ENCODE measurements at regions of chr1 and their contacts with region 1.

Region 1: GRCh38 chr1:113759333-113760101 is at the start of gene PHTF1:
- DNase-seq: peak; percentile 53
- H3K4me3 Mint-ChIP-seq: peak within 1 kb of the TSS; percentile 95
- H3K27ac Mint-ChIP-seq: peak within 1 kb of the TSS; percentile 97
- H3K4me1 Mint-ChIP-seq: peaks cover 37% of the 10 kb centered on the region
- H3K27me3 Mint-ChIP-seq: no peaks in the 10 kb centered on the region
- total RNA-seq, gene PHTF1: 14.7 and 16.6 TPM in 2 replicates

Region 2: DNA sequence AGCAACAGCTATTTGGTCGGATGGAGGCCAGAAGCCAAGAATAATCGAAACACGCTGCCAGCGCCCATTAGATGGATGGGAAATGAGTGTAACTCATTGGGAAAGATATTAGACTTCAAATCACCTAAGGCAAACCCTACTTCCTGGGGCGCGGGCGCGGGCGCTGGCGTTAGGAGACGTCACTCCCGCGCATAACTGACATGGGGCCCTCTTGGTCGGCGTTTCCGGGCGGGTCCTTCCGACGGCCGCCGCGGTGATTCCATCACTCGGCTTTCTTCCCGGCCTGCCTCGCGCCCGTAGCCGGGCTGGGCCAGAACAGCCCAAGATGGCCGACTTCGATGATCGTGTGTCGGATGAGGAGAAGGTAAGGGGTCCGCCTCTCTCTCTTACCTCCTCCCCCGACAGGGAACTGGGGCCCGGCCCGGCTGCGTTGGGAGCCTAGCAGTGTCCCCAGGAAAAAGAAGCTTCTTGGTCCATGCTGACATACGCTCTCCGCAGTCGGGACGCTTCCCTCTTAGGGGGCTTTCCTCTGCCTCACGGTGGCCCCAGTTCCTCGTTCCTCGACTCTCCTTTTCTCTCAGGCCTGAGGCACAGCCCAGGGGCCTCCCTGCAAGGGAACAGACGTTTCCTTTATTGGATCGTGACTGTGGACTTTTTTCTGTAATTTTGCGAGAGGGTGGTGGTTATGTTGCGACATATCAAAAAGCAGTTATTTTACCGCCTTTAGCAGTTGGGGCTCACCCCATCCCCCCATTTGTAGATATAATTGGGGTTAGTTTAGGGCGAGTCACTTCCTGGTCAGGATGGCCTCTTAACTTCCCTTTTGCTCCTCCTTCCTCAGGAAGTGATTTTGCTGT is 1139.8 kb before region 1 on chr1 and contains the start of gene CAPZA1:
- intact Hi-C with region 1: loop called (anchors 2 kb)
- DNase-seq: peak; percentile 90
- H3K4me3 Mint-ChIP-seq: peak within 1 kb of the TSS; percentile 98
- H3K27ac Mint-ChIP-seq: peak within 1 kb of the TSS; percentile 98
- H3K4me1 Mint-ChIP-seq: peaks cover 48% of the 10 kb centered on the region
- H3K27me3 Mint-ChIP-seq: no peaks in the 10 kb centered on the region
- total RNA-seq, gene CAPZA1: 239 and 242 TPM in 2 replicates

Region 3: DNA sequence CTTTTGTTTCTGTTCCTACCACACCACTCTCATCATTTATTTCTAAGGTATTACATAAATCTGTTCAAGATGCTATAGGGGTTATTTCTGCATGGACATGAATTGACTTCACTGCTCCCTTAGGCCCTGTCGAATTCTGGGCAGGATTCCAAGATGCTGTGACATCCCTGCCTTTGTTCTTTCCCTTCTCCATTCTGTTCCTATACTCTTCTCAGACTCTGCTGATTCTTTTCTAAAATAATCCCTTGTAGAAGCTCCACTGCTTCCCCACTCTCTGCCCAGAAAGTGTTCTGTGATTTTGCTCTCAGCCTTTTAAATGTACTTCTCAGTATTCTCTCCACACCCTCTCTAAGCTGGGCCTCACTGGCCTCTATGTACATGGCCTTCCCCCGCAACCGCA is 99.4 kb before region 1 on chr1:
- intact Hi-C with region 1: no loop called
- DNase-seq: no peak
- H3K4me3 Mint-ChIP-seq: no peak overlapping the region
- H3K27ac Mint-ChIP-seq: no peak overlapping the region
- H3K4me1 Mint-ChIP-seq: no peaks in the 10 kb centered on the region
- H3K27me3 Mint-ChIP-seq: no peaks in the 10 kb centered on the region

Region 4: DNA sequence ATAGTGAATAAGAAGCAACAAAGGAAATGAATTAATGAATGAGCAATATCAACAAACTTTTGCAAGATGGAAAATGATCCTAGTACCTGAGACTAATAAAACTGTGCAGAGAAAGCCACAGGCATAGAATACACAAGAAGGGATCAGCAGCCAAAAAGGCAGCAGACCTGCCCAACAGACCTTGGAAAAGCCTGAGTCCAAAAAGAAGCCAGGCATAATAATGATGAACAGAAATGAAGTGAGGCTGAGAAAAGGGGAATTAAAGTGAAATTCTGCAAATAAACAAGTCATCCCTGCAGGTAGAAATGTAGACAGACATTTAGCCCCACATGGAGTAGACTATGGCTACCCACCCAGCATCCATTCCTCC is 10.1 kb after region 1 on chr1:
- intact Hi-C with region 1: no loop called
- DNase-seq: no peak
- H3K4me3 Mint-ChIP-seq: no peak overlapping the region
- H3K27ac Mint-ChIP-seq: no peak overlapping the region
- H3K4me1 Mint-ChIP-seq: peaks cover 44% of the 10 kb centered on the region
- H3K27me3 Mint-ChIP-seq: no peaks in the 10 kb centered on the region

Region 5: DNA sequence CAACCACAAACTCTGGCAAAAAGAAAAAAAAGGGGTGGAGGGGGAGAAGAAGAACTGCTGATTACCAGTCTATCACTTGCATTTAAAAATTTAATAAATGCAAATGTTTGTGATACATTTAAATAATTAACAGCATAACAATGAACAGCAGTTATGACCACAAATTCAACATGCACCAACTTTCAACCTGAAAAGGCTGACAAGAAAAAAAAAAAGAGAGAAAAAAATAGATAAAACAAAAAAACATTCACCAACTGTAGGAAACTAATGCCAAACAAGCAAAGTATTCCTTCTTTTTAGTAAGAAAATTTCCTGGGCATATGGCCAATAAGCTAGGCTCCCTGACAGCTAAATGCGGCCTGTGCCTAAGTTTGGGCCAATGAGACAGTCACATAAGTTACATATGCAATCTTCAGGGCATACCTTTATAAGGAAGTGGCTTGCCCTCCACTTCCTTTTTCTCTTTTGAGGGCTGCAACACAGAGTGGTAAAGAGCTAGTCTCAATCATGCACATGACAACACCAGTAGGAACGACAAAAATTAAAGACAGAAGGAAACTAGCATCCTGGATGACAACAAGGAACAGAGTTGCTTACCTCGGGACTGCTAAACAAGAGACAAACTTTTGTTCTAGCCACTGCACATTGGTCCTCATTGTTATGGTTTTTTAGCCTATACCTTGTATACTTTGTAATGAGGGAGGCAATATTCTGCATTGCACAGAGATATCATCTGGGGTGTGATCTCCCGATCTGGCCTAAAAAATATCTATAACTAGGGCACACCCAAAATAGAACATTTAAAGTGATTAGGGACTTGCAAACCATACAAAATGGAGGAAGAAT is 24.0 kb after region 1 on chr1:
- intact Hi-C with region 1: loop called (anchors 1 kb)
- DNase-seq: peak; percentile 41
- H3K4me3 Mint-ChIP-seq: peak overlapping the region; percentile 59
- H3K27ac Mint-ChIP-seq: peak overlapping the region; percentile 93
- H3K4me1 Mint-ChIP-seq: peaks cover 25% of the 10 kb centered on the region
- H3K27me3 Mint-ChIP-seq: no peaks in the 10 kb centered on the region

Region 6: GRCh38 chr1:113802367-113803007 is 43.0 kb after region 1 on chr1:
- intact Hi-C with region 1: loop called (anchors 2 kb)
- DNase-seq: no peak
- H3K4me3 Mint-ChIP-seq: no peak overlapping the region
- H3K27ac Mint-ChIP-seq: no peak overlapping the region
- H3K4me1 Mint-ChIP-seq: peaks cover 49% of the 10 kb centered on the region
- H3K27me3 Mint-ChIP-seq: no peaks in the 10 kb centered on the region

Region 7: DNA sequence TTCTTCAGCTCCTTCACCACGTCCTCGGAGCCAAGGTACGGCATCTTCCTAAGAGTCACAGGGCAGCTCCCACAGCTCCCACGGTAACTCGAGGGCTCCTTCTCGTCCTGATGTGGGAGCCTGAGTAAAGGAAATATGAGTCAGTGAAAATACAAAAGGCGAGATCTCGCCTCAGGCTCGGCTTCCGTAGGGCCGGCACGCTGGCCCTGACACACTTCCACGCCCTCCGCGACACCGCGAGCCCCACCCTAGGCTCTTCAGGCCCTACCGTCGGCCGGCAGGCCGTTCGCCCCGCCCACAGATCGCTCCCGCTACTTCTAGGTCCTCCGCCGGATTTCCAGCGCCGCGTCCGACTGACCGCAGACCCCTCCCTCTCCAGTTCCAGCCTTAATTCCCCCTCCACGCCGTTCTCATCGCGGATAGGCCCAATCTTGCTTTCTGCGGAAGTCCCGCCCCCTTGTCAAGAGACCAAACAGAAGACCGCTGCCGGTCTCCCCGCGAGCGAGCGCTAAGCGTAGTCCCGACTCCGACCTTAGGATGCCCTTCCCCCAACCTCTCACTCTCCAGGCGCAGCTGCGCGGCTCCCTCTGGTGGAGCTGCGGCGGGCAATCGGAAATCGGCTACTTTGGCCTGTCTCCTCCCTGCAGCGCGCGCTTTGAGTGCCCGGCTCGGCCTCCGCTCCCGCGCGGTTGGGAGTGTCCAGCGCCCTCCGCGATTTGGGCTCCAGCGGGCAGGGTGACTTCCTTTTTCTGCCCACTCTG is 145.3 kb after region 1 on chr1 and contains the starts of genes AP4B1 and DCLRE1B:
- intact Hi-C with region 1: loop called (anchors 1 kb)
- DNase-seq: peak; percentile 98
- H3K4me3 Mint-ChIP-seq: peak within 1 kb of the TSS; percentile 99
- H3K27ac Mint-ChIP-seq: peak within 1 kb of the TSS; percentile 95
- H3K4me1 Mint-ChIP-seq: peaks cover 58% of the 10 kb centered on the region
- H3K27me3 Mint-ChIP-seq: no peaks in the 10 kb centered on the region
- total RNA-seq, gene AP4B1: 36.3 and 40.9 TPM in 2 replicates
- total RNA-seq, gene DCLRE1B: 20.9 and 21.2 TPM in 2 replicates

Measured in activated T-helper 1 cell treated with anti-CD3 and anti-CD28 coated beads, Interleukin-12 subunit alpha, Interleukin-12 subunit beta, Interleukin-2, Interleukin-4 antibody, amounts not matched to agents 30 ng/mL and 10 ng/mL and 1 ng/mL, durations not matched to agents 14 hours and 24 hours and 36 hours (primary cell).